ENCODE measurements at regions of chr1 and their contacts with region 1.

Region 1: DNA sequence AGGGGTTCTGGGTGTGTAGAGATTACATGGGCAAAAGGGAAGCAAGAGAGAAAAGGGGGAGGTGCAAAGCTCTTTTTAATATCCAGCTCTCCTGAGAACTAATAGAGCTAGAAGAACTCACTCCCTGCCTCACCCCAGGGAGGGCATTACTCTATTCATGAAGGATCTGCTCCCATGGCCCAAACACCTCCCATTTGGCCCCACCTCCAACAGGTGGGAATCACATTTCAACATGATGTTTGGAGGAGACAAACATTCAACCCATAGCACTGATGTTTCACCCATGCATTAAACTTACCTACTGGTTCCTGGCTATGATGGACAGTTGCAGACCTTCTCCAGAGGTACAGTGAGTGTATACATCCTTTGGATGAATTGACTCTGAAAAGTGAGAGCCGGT is 7.3 kb upstream of the JUN start:
- DNase-seq: no peak
- ATAC-seq: no peak
- H3K4me3 ChIP-seq: no peak overlapping the region
- H3K27ac ChIP-seq: no peak overlapping the region
- H3K4me1 ChIP-seq: peaks cover 0 to 8% (median 1%) of the 10 kb centered on the region in 9 donors
- H3K27me3 ChIP-seq: no peaks in the 10 kb centered on the region
- CTCF ChIP-seq: no peak

Region 2: DNA sequence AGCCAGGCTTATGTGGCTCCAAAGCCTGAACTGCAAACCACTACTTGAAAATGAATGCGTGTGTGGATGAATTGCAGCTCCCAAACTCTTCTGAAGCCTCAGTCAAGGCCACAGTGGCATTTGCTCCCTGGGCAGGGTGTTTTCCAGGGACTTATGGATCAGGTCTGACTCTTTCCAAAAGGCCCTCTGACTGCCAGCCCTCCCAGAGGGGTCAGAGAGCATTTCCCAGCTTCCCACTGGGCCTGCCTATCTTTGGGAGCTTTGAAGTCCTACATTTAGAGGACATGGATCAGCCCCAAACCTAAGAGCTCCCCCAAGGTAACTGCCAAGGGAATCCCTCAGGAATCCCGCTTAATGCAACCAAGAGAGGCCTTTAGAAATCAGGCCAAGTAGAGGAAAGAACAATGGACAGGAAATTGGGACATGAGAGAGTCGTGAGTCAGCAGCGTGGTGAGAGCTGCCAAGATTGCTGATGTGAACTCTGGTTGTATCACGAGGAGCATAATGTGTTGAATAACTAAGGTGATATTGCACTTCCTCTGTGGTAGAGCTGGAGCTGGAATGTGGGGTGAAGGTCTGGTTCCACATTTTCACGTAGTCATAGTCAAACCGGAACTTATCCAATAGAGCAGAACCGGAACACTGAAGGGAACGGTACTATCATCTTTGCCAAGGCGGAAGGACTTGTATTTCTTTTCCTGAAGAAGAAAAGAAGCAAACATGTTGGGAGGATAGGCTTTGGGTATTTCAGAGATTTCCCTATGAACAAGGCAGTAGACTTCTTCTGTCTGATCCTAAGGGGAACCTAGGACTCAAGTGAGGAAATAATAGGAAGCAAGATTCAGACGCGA is 92.2 kb after region 1 on chr1:
- intact Hi-C with region 1: loop called in 1 of 10 experiments (anchors 5 kb)
- DNase-seq: peak; percentile 62 to 76
- ATAC-seq: peak; percentile 49 to 87 (median 73)
- H3K4me3 ChIP-seq: no peak overlapping the region
- H3K27ac ChIP-seq: peak overlapping the region; percentile 24 to 89 (median 74)
- H3K4me1 ChIP-seq: peaks cover 13 to 71% (median 54%) of the 10 kb centered on the region in 9 donors
- H3K27me3 ChIP-seq: no peaks in the 10 kb centered on the region
- CTCF ChIP-seq: no peak

Measured in heart right ventricle (tissue), 16 donors.